Activated CD4-positive, alpha-beta memory T cell treated with anti-CD3 and anti-CD28 coated beads for 36 hours (primary cell): ENCODE measurements at regions of chr17 and their contacts with region 1.

Region 1: DNA sequence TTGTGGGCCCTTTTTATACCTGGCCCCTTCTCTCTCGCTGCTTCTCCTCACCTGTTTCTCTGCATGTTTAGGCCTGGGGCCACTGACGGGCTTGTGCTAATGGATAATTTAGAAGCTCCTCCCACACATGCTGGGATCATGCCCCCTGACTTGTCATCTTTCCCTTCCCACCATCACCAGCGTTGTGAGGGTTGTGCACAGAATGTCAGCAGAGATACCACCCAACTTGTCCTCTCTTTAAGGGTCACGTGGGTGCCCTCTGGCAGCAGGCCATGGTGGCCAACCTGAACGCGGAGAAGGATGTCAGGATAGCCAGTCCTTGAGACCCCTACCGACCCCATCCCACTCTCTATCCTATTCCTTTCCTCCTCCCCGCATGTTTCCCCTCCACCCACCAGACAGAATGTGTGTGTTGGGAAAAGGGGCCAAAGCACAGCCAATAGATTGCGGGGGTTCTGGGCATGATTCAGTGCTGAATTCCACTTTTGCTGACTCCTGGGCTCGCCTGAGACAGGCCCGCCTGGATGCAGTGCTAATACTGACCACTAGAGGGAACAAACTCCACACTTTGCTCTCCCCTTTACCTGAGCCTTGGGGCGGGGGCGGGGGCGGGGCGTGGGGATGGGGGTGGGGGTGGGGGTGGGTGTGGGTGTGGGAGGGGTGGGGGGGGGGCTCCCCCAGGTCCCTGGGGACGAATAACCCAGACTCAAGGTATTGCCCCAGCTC is at the start of gene GH2:
- DNase-seq: peak; percentile 75
- H3K4me3 Mint-ChIP-seq: no peak within 1 kb of the TSS
- H3K27ac Mint-ChIP-seq: peak within 1 kb of the TSS; percentile 8
- H3K4me1 Mint-ChIP-seq: no peaks in the 10 kb centered on the region
- H3K27me3 Mint-ChIP-seq: no peaks in the 10 kb centered on the region
- total RNA-seq, gene GH2: not detected

Region 2: DNA sequence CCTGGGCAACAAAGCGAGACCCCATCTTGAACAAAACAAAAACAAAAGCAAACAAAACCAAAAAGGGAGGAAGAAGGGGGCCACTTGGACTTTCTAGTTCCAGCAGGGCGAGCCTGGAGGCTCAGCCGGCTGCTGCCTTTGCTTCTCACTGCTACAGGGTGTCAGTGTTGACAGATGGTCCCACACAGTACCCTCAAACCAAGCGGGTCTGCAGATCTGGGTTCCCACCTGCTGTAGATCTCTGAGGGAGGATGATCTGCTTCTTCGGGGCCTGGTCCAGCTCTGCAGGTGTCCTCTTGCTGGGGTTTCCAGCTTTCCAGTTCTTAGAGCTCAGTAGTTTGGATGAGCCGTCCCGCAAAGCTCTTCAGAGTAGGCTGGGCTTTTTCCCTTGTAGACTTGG is 22.3 kb after region 1 on chr17:
- CTCF ChIA-PET with region 1: interaction called, 16 read pairs
- POLR2A ChIA-PET with region 1: no interaction called
- intact Hi-C with region 1: no loop called
- DNase-seq: no peak
- H3K4me3 Mint-ChIP-seq: no peak overlapping the region
- H3K27ac Mint-ChIP-seq: no peak overlapping the region
- H3K4me1 Mint-ChIP-seq: peaks cover 11% of the 10 kb centered on the region
- H3K27me3 Mint-ChIP-seq: no peaks in the 10 kb centered on the region